ENCODE measurements at regions of chr6 and their contacts with region 1.

Region 1: DNA sequence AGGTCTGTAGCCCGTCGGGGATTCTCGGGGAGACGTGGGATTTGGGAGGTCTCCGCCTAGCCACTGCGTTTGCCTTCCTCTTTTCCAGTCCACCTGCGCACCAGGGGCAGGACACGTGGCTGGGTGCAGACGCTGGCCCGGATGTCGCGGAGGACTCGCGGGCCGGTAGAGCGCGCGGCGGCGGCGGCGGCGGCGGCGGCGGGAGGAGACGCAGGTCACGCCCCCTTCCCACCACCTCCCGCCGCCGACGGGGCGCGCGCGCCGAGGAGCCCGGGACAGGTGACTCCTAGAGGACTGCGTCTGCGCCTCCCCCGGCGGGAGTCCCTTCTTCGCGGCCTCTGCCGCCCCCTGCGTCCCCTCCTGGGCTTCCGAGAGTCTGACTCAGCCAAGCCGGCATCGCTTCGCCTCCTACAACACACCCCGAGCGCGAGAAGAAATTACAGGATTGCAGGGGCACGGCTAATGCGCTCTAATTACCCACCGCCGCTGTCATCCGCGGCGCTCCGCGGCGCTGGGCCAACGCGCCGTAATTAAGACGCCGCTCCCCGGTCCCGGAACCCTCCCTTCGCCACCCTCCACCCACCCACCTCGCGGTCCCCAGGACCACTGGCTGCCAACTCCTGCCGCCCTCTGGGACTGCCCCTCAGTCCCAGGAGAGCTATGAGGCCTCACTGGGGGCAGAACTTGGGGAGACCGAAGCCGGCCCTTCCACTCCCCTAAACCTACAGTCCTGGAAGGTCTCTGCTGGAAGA is 124.5 kb downstream of the MRPL14 start:
- DNase-seq: peak; percentile 49
- H3K4me3 Mint-ChIP-seq: peak overlapping the region; percentile 54
- H3K27ac Mint-ChIP-seq: no peak overlapping the region
- H3K4me1 Mint-ChIP-seq: peaks cover 10% of the 10 kb centered on the region
- H3K27me3 Mint-ChIP-seq: peaks cover 27% of the 10 kb centered on the region

Region 2: DNA sequence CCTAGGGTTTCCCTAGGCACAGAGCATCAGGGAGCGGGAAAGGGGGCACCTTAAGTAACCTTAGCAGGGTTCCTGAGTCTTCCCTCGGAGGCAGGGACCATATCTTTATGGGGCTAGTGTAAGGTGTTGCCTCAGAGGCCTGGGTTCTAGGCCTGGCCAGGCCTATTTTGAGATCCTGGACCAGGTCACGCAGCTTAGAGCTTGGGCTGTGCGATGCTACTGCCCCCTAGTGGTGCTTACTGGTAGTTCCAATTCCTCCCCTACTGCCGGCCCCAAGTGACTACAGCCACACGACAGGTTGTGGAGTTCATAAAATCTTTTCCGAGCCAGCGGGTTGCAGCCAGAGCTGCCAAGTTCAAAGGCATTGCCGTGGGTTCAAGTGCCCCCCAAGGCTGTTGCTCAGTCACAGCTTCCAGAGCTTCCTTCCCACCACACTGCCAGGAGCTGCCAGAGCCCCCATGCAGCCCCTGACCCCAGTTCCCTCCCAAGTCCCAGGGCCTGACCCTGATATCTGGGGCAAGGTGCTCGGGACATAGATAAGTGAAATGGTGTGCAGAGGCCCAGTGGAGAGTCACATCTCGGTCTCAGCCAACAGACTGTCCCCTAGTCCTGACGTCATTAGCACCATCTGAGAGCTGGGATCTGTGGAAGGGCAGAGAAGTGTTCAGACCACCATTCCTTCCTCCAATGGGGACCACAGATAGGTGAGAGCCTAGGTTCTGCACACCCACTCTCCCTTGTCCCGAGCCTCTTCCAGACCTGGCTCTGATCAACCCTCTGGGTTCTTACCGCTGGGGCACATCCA is 495.9 kb before region 1 on chr6:
- intact Hi-C with region 1: no loop called
- DNase-seq: peak; percentile 74
- H3K4me3 Mint-ChIP-seq: no peak overlapping the region
- H3K27ac Mint-ChIP-seq: no peak overlapping the region
- H3K4me1 Mint-ChIP-seq: peaks cover 10% of the 10 kb centered on the region
- H3K27me3 Mint-ChIP-seq: peaks cover 17% of the 10 kb centered on the region

Region 3: DNA sequence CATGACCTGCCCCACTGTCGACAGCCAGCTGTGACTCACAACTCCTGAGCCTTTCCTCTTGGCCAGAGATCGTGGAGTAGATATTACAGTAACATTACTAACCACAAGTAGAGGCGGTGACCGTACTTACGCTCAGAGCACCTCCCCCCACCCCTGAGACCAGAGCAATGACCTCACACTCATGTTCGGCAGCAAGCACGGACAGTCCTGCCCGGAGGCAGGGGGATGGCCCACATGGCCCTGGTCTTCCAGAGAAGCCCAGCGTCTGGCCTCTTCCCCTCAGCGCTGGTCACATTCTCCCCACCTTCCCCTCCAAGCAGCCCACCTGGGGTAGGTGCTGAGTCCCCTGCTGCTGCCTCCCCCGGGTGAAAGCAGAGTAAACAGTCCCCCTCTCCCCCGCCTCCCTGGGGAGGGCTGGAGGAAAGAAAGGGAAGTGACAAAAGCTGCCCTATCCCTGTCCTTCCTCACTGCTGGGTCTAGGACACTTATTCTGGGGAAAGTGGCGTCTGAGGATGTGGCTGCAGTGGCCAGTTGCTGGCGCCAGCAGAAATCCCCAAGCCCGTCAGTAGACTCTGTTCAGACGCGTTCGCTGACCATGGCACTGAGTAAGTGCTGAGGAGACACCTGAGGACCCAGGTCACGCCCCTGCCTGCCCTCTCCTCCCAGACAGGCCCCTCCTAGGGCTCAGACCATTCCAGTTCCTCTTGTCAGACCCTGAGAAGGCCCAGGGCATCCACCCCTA is 56.0 kb after region 1 on chr6:
- intact Hi-C with region 1: loop called (anchors 5 kb)
- DNase-seq: peak; percentile 20
- H3K4me3 Mint-ChIP-seq: no peak overlapping the region
- H3K27ac Mint-ChIP-seq: peak overlapping the region; percentile 51
- H3K4me1 Mint-ChIP-seq: peaks cover 19% of the 10 kb centered on the region
- H3K27me3 Mint-ChIP-seq: no peaks in the 10 kb centered on the region